ENCODE measurements at regions of chr12 and their contacts with region 1.

Region 1: GRCh38 chr12:27014085-27014858 is at the start of gene TM7SF3:
- DNase-seq: peak; percentile 96
- H3K4me3 Mint-ChIP-seq: peak within 1 kb of the TSS; percentile 91
- H3K27ac Mint-ChIP-seq: peak within 1 kb of the TSS; percentile 88
- H3K4me1 Mint-ChIP-seq: peaks cover 45% of the 10 kb centered on the region
- H3K27me3 Mint-ChIP-seq: no peaks in the 10 kb centered on the region
- total RNA-seq, gene TM7SF3: 39.1 to 42.8 TPM

Region 2: GRCh38 chr12:26434299-26435068 is 579.8 kb before region 1 on chr12:
- CTCF ChIA-PET with region 1: no interaction called
- intact Hi-C with region 1: loop called (anchors 5 kb)
- DNase-seq: peak; percentile 34
- H3K4me3 Mint-ChIP-seq: no peak overlapping the region
- H3K27ac Mint-ChIP-seq: no peak overlapping the region
- H3K4me1 Mint-ChIP-seq: no peaks in the 10 kb centered on the region
- H3K27me3 Mint-ChIP-seq: no peaks in the 10 kb centered on the region

Region 3: DNA sequence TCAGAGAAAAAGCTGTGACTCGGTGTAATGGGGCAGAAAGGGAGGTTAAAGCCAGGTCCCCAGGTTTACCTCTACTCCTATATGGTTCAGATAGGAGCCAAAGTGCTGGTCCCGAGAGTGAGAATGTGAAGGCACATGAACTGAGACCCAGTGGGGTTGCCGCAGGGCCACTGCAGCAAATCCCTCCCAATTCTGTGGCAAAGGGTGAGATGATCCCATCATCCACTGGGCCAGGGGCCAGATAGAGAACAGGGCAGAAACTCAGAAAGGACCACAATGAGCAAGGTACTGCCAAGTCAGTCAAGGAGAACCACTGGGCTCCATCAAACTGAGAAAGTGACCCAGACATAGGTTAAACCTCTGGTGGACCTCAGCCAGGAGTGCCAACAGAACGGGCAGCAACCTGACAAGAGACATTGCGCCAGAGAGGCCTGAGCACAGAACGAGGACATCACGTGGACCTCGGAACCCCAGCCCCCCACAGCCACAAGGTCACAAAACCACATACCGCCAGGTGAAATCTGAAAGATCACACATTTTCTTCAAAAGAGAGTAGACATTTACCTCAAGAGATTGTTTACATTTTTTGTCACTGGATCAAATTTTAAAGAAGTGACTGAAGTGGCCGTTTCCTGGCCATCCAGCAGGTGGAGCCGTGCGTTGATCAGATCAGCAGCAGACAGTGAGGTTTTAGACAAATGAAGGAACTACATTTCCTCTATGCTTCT is 160.8 kb before region 1 on chr12:
- CTCF ChIA-PET with region 1: interaction called, 3 read pairs
- intact Hi-C with region 1: loop called (anchors 1 kb)
- DNase-seq: peak; percentile 86
- H3K4me3 Mint-ChIP-seq: no peak overlapping the region
- H3K27ac Mint-ChIP-seq: no peak overlapping the region
- H3K4me1 Mint-ChIP-seq: no peaks in the 10 kb centered on the region
- H3K27me3 Mint-ChIP-seq: peaks cover 3% of the 10 kb centered on the region

Region 4: GRCh38 chr12:27123642-27124041 is 109.4 kb after region 1 on chr12:
- CTCF ChIA-PET with region 1: interaction called, 4 read pairs
- intact Hi-C with region 1: loop called (anchors 1 kb)
- DNase-seq: no peak
- H3K4me3 Mint-ChIP-seq: no peak overlapping the region
- H3K27ac Mint-ChIP-seq: no peak overlapping the region
- H3K4me1 Mint-ChIP-seq: no peaks in the 10 kb centered on the region
- H3K27me3 Mint-ChIP-seq: no peaks in the 10 kb centered on the region

Region 5: GRCh38 chr12:27305673-27306456 is 291.6 kb after region 1 on chr12:
- CTCF ChIA-PET with region 1: interaction called, 95 read pairs
- intact Hi-C with region 1: loop called (anchors 1 kb)
- DNase-seq: no peak
- H3K4me3 Mint-ChIP-seq: no peak overlapping the region
- H3K27ac Mint-ChIP-seq: no peak overlapping the region
- H3K4me1 Mint-ChIP-seq: no peaks in the 10 kb centered on the region
- H3K27me3 Mint-ChIP-seq: no peaks in the 10 kb centered on the region

Region 6: GRCh38 chr12:27652174-27652763 is 638.0 kb after region 1 on chr12:
- CTCF ChIA-PET with region 1: no interaction called
- intact Hi-C with region 1: loop called (anchors 5 kb)
- DNase-seq: peak; percentile 44
- H3K4me3 Mint-ChIP-seq: no peak overlapping the region
- H3K27ac Mint-ChIP-seq: no peak overlapping the region
- H3K4me1 Mint-ChIP-seq: peaks cover 4% of the 10 kb centered on the region
- H3K27me3 Mint-ChIP-seq: no peaks in the 10 kb centered on the region